ENCODE measurements at regions of chr3 and their contacts with region 1.

Region 1: GRCh38 chr3:20039766-20040475 is at the start of gene KAT2B:
- DNase-seq: peak; percentile 75 to 87 (median 84)
- ATAC-seq: peak; percentile 87
- H3K4me3 ChIP-seq: peak within 1 kb of the TSS; percentile 91
- H3K4me3 Mint-ChIP-seq: peak within 1 kb of the TSS; percentile 92 to 100 (median 96)
- H3K27ac ChIP-seq: peak within 1 kb of the TSS; percentile 79
- H3K27ac Mint-ChIP-seq: peak within 1 kb of the TSS; percentile 94 to 98 (median 97)
- H3K4me1 ChIP-seq: peaks cover 40 to 41% of the 10 kb centered on the region in 2 donors
- H3K4me1 Mint-ChIP-seq: peaks cover 41 to 57% (median 55%) of the 10 kb centered on the region in 7 donors
- H3K27me3 ChIP-seq: no peaks in the 10 kb centered on the region
- H3K27me3 Mint-ChIP-seq: no peaks in the 10 kb centered on the region
- total RNA-seq, gene KAT2B: 58.5 to 127 (median 62.5) TPM

Region 2: GRCh38 chr3:19146685-19147650 is 893.0 kb before region 1 on chr3:
- CTCF ChIA-PET with region 1: no interaction called
- POLR2A ChIA-PET with region 1: no interaction called
- intact Hi-C with region 1: loop called in 1 of 2 experiments (anchors 1 kb)
- DNase-seq: peak; percentile 25 to 88 (median 61)
- ATAC-seq: peak; percentile 75
- H3K4me3 ChIP-seq: peak overlapping the region; percentile 72
- H3K4me3 Mint-ChIP-seq: peak overlapping the region; percentile 90 to 95 (median 93)
- H3K27ac ChIP-seq: peak overlapping the region; percentile 59
- H3K27ac Mint-ChIP-seq: peak overlapping the region; percentile 25 to 94 (median 84)
- H3K4me1 ChIP-seq: peaks cover 3 to 17% of the 10 kb centered on the region in 2 donors
- H3K4me1 Mint-ChIP-seq: peaks cover 8 to 28% (median 21%) of the 10 kb centered on the region in 7 donors
- H3K27me3 ChIP-seq: no peaks in the 10 kb centered on the region
- H3K27me3 Mint-ChIP-seq: peaks cover 40 to 63% (median 53%) of the 10 kb centered on the region in 5 donors

Region 3: DNA sequence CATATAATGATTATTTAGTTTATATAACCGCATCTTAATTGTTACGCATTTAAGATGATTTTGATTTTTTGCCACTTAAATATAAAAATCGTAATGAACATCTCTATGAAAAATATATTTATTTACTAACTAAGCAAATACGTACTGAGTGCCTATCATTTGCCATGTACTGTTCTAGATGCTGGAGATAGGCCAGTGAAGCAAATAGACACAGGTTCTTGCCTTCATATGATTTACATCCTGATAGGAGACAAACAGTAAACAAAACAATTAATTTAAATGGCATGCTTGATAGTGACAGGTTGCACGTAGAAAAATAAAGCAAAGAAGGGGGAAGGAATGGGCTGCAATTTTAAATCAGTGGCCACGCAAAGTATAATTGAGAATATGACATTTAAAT is 674.5 kb before region 1 on chr3:
- CTCF ChIA-PET with region 1: no interaction called
- POLR2A ChIA-PET with region 1: no interaction called
- intact Hi-C with region 1: no loop called
- DNase-seq: no peak
- ATAC-seq: no peak
- H3K4me3 ChIP-seq: no peak overlapping the region
- H3K4me3 Mint-ChIP-seq: no peak overlapping the region
- H3K27ac ChIP-seq: no peak overlapping the region
- H3K27ac Mint-ChIP-seq: no peak overlapping the region
- H3K4me1 ChIP-seq: no peaks in the 10 kb centered on the region
- H3K4me1 Mint-ChIP-seq: no peaks in the 10 kb centered on the region
- H3K27me3 ChIP-seq: no peaks in the 10 kb centered on the region
- H3K27me3 Mint-ChIP-seq: peaks cover 0 to 5% (median 0%) of the 10 kb centered on the region in 5 donors

Region 4: GRCh38 chr3:19457454-19457853 is 582.5 kb before region 1 on chr3:
- CTCF ChIA-PET with region 1: no interaction called
- POLR2A ChIA-PET with region 1: no interaction called
- intact Hi-C with region 1: no loop called
- DNase-seq: no peak
- ATAC-seq: no peak
- H3K4me3 ChIP-seq: no peak overlapping the region
- H3K4me3 Mint-ChIP-seq: no peak overlapping the region
- H3K27ac ChIP-seq: no peak overlapping the region
- H3K27ac Mint-ChIP-seq: no peak overlapping the region
- H3K4me1 ChIP-seq: no peaks in the 10 kb centered on the region
- H3K4me1 Mint-ChIP-seq: no peaks in the 10 kb centered on the region
- H3K27me3 ChIP-seq: no peaks in the 10 kb centered on the region
- H3K27me3 Mint-ChIP-seq: peaks cover 0 to 5% (median 0%) of the 10 kb centered on the region in 5 donors

Region 5: GRCh38 chr3:19931180-19931692 is 108.7 kb before region 1 on chr3:
- CTCF ChIA-PET with region 1: no interaction called
- POLR2A ChIA-PET with region 1: no interaction called
- intact Hi-C with region 1: loop called in 1 of 2 experiments (anchors 5 kb)
- DNase-seq: peak in 1 of 9 donors; percentile 70
- ATAC-seq: peak; percentile 86
- H3K4me3 ChIP-seq: no peak overlapping the region
- H3K4me3 Mint-ChIP-seq: peak overlapping the region in 1 of 10 donors; percentile 61
- H3K27ac ChIP-seq: no peak overlapping the region
- H3K27ac Mint-ChIP-seq: peak overlapping the region in 1 of 9 donors; percentile 14
- H3K4me1 ChIP-seq: no peaks in the 10 kb centered on the region
- H3K4me1 Mint-ChIP-seq: peaks cover 0 to 27% (median 1%) of the 10 kb centered on the region in 7 donors
- H3K27me3 ChIP-seq: peaks cover 0 to 2% of the 10 kb centered on the region in 2 donors
- H3K27me3 Mint-ChIP-seq: peaks cover 13 to 32% (median 18%) of the 10 kb centered on the region in 5 donors

Region 6: DNA sequence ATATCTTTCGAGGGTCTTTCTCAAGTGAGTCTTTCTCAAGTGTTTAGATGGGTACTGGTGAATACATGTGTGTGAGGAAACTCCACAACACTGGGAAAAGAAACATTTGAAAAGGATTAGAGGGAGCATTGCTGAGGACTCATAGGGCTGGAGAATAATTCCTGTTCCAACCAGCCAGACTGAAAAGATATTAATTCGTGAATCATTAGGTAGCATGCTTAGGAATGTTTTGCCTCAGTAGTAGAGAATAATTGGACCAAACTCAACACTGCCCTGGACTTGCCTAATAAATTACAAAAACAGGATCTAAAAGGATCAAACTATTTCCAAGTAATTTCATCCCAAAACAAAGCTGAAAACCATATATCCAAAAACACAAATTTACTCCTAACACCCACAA is 45.1 kb before region 1 on chr3:
- CTCF ChIA-PET with region 1: no interaction called
- POLR2A ChIA-PET with region 1: no interaction called
- intact Hi-C with region 1: loop called (anchors 5 kb)
- DNase-seq: no peak
- ATAC-seq: no peak
- H3K4me3 ChIP-seq: no peak overlapping the region
- H3K4me3 Mint-ChIP-seq: no peak overlapping the region
- H3K27ac ChIP-seq: no peak overlapping the region
- H3K27ac Mint-ChIP-seq: no peak overlapping the region
- H3K4me1 ChIP-seq: no peaks in the 10 kb centered on the region
- H3K4me1 Mint-ChIP-seq: peaks cover 0 to 5% (median 0%) of the 10 kb centered on the region in 7 donors
- H3K27me3 ChIP-seq: no peaks in the 10 kb centered on the region
- H3K27me3 Mint-ChIP-seq: no peaks in the 10 kb centered on the region

Region 7: GRCh38 chr3:20071175-20071574 is 31.3 kb after region 1 on chr3:
- CTCF ChIA-PET with region 1: interaction called, 3 read pairs
- POLR2A ChIA-PET with region 1: no interaction called
- intact Hi-C with region 1: loop called in 1 of 2 experiments (anchors 2 kb)
- DNase-seq: no peak
- ATAC-seq: no peak
- H3K4me3 ChIP-seq: no peak overlapping the region
- H3K4me3 Mint-ChIP-seq: no peak overlapping the region
- H3K27ac ChIP-seq: no peak overlapping the region
- H3K27ac Mint-ChIP-seq: peak overlapping the region in 1 of 9 donors; percentile 50
- H3K4me1 ChIP-seq: no peaks in the 10 kb centered on the region
- H3K4me1 Mint-ChIP-seq: peaks cover 13 to 37% (median 28%) of the 10 kb centered on the region in 7 donors
- H3K27me3 ChIP-seq: no peaks in the 10 kb centered on the region
- H3K27me3 Mint-ChIP-seq: no peaks in the 10 kb centered on the region

Region 8: DNA sequence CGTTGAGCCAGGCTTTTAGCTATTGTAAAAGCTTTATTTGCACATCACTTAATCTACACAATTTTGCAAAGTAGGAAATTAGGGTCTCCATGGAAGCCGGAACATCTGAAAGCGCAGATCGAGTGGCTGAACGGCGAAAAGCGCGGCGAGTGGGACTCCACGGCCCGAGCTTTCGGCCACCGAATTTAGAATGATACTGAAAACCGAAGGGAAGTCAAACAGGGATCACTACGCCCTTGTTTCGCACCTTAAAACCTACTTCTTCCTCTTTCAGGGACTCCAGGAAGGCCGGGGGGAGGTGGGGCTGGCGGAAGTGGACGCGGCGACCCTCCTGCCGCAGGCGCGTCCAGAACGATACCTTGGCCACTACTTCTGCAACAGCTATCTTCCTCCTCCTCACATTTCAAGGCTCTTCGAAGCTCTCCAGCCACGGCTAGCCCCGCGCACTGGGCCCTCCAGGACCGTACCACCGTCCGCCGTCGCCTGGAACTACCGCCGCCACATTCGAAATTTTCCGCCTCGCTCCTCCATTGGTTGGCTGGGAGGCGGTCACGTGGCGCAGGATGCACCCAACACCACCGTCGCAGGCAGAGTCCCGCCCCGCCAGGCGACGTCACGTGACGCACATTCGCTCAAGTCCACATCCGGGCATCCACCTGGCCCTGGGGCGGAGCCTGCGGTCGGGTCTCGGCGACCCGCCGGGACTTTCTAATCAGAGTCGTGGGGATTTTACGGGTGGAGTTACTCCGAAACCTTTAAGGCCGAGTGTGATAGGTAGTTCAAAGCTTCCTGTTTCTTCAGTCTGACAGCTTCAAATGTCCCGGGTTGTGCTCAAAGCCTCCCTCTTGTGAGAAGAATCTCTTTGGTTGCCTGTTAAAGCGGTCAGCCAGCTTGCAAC is 146.0 kb after region 1 on chr3 and contains the start of gene SGO1:
- CTCF ChIA-PET with region 1: no interaction called
- POLR2A ChIA-PET with region 1: interaction called, 13 read pairs
- intact Hi-C with region 1: loop called (anchors 1 kb)
- DNase-seq: peak; percentile 98 to 100 (median 99)
- ATAC-seq: peak; percentile 95
- H3K4me3 ChIP-seq: peak within 1 kb of the TSS; percentile 68
- H3K4me3 Mint-ChIP-seq: no peak within 1 kb of the TSS
- H3K27ac ChIP-seq: peak within 1 kb of the TSS; percentile 93
- H3K27ac Mint-ChIP-seq: no peak within 1 kb of the TSS
- H3K4me1 ChIP-seq: peaks cover 16 to 17% of the 10 kb centered on the region in 2 donors
- H3K4me1 Mint-ChIP-seq: peaks cover 0 to 25% (median 4%) of the 10 kb centered on the region in 7 donors
- H3K27me3 ChIP-seq: no peaks in the 10 kb centered on the region
- H3K27me3 Mint-ChIP-seq: peaks cover 0 to 2% (median 0%) of the 10 kb centered on the region in 5 donors
- total RNA-seq, gene SGO1: 0.44 to 25.0 (median 0.89) TPM

Measured in naive thymus-derived CD4-positive, alpha-beta T cell (primary cell).